Calu3 (cell line): ENCODE measurements at regions of chr16 and their contacts with region 1.

Region 1: GRCh38 chr16:51762081-51762996 is 611.3 kb upstream of the SALL1 start:
- DNase-seq: peak; percentile 86
- H3K4me3 Mint-ChIP-seq: peak overlapping the region; percentile 29
- H3K27ac Mint-ChIP-seq: no peak overlapping the region
- H3K4me1 Mint-ChIP-seq: peaks cover 18% of the 10 kb centered on the region
- H3K27me3 Mint-ChIP-seq: peaks cover 65% of the 10 kb centered on the region
- CTCF ChIP-seq: peak; percentile 96

Region 2: DNA sequence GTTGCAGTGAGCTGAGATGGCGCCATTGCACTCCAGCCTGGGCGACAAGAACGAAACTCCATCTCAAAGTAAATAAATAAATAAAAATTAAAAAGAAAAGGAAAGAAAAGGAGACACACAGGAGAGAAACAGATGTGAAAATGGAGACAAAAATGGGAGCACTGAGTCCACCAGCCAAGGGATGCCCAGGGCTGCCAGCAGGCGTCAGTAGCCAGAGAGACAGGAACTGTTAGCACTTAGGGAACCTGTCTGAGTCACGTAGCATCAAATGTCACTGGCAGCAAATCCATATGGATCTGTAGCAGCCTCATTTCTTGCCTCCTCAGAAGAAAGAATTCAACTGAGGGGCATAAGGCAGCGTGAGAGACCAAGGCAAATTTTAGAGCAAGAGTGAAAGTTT is 940.8 kb before region 1 on chr16:
- CTCF ChIA-PET with region 1: no interaction called
- intact Hi-C with region 1: loop called (anchors 1 kb)
- DNase-seq: peak; percentile 58
- H3K4me3 Mint-ChIP-seq: no peak overlapping the region
- H3K27ac Mint-ChIP-seq: no peak overlapping the region
- H3K4me1 Mint-ChIP-seq: peaks cover 9% of the 10 kb centered on the region
- H3K27me3 Mint-ChIP-seq: peaks cover 57% of the 10 kb centered on the region
- CTCF ChIP-seq: peak; percentile 43

Region 3: DNA sequence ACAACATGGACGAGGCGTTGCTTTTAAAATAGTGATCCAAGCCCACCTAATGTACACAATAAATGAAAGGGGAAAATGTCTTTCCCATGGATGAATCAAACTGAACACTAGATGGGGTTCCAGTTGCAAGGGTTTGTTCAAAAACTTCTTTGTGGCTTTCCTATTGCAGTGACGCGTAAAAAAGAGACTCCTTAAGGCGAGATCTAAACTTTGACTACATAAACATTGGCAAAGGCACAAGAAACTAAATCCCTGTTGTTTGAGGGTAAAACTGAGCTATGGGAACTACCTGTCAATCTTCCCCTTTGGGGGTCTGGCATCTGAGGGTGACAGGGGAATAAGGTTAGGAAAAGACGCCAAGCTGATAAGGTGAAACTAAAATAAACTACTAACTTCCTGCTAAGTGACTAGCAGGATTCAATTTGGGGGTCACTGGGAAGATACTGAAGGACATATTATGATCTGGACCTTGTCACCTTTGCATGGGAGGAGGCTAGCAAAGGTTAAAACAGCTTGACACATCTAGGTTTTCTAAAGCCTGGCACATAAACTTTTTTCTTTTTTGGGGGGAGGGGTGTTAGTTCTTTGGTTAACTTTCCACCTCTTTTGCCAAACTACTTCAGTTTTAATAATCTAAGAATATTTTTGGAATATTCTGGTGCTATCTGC is 615.9 kb before region 1 on chr16:
- CTCF ChIA-PET with region 1: no interaction called
- intact Hi-C with region 1: loop called (anchors 1 kb)
- DNase-seq: no peak
- H3K4me3 Mint-ChIP-seq: no peak overlapping the region
- H3K27ac Mint-ChIP-seq: no peak overlapping the region
- H3K4me1 Mint-ChIP-seq: peaks cover 12% of the 10 kb centered on the region
- H3K27me3 Mint-ChIP-seq: peaks cover 44% of the 10 kb centered on the region
- CTCF ChIP-seq: peak; percentile 34